Esophagus squamous epithelium (tissue), 5 donors: ENCODE measurements at regions of chr3 and their contacts with region 1.

Region 1: DNA sequence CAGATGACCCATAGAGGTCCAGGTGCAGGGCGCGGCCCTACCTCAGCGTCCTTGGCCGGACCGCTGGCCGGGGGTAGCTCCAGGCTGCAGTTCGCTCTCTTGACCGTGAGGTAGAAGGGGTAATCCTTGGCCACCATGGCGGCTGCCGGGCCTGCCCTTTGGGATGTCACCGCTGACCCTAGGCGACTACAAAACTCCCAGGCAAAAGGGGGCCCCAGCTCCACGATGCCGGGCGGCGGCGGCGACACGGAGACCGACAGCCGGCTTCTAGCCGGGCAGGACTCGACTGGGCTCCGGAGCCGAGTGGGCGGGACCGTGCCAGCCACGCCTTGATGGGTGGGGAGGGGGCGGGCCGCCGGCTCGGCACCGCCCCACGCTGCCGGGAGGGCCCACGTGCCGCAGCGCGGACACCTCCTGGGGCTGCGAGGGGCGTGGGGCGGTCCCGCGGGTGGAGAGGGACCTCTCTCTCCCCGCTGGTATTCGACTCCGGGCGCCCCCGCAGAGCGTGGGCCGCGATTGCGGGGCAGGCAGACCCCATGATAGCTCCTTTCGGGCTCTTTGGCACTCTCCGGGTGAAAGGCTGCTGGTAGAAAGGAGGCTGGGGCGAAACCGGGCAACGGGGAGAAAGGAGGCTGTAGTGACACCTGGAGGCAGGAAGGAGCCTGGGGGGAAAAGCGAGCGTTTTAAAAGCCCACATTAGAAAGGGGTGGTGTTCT is at the start of gene ARHGEF3:
- DNase-seq: no peak
- H3K4me3 ChIP-seq: peak within 1 kb of the TSS; percentile 49 to 94 (median 80)
- H3K27ac ChIP-seq: peak within 1 kb of the TSS; percentile 73 to 90 (median 82)
- H3K4me1 ChIP-seq: peaks cover 24 to 82% (median 29%) of the 10 kb centered on the region in 3 donors
- H3K27me3 ChIP-seq: no peaks in the 10 kb centered on the region
- CTCF ChIP-seq: peak; percentile 18 to 63 (median 45)
- POLR2A ChIP-seq: peak in 3 of 4 donors; percentile 5 to 95 (median 71)
- total RNA-seq, gene ARHGEF3: 20.6 to 26.3 (median 24.7) TPM

Region 2: GRCh38 chr3:56702490-56703315 is 99.1 kb before region 1 on chr3:
- intact Hi-C with region 1: loop called (anchors 5 kb)
- DNase-seq: no peak
- H3K4me3 ChIP-seq: no peak overlapping the region
- H3K27ac ChIP-seq: no peak overlapping the region
- H3K4me1 ChIP-seq: peaks cover 0 to 9% (median 0%) of the 10 kb centered on the region in 3 donors
- H3K27me3 ChIP-seq: no peaks in the 10 kb centered on the region
- CTCF ChIP-seq: peak; percentile 77 to 93 (median 88)
- POLR2A ChIP-seq: no peak